Activated CD4-positive, alpha-beta memory T cell treated with anti-CD3 and anti-CD28 coated beads for 36 hours (primary cell): ENCODE measurements at regions of chr12 and their contacts with region 1.

Region 1: DNA sequence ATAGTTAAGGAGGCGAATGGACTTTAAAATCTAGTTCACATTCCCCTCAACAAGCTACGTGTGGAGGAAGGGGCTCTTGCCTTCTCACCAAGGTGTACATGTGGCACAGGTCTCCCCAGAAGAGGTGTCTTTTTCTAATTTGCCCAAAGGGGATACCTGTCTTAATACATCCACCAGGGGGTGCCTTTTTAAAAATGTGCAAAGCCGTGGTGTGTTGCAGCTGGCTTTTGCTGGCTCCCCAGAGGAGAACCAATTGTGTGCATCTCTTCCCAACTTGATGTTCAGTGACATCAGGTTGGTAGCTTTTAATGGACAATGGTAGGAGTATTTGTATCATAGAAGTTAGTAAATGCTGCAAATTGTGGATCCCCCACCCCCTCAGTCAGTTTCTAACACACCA is 33.8 kb downstream of the CREBL2 start:
- DNase-seq: peak; percentile 47
- H3K4me3 Mint-ChIP-seq: peak overlapping the region; percentile 29
- H3K27ac Mint-ChIP-seq: peak overlapping the region; percentile 82
- H3K4me1 Mint-ChIP-seq: peaks cover 21% of the 10 kb centered on the region
- H3K27me3 Mint-ChIP-seq: no peaks in the 10 kb centered on the region

Region 2: GRCh38 chr12:11885261-11886038 is 760.0 kb before region 1 on chr12:
- CTCF ChIA-PET with region 1: no interaction called
- POLR2A ChIA-PET with region 1: no interaction called
- intact Hi-C with region 1: no loop called
- DNase-seq: no peak
- H3K4me3 Mint-ChIP-seq: no peak overlapping the region
- H3K27ac Mint-ChIP-seq: no peak overlapping the region
- H3K4me1 Mint-ChIP-seq: peaks cover 25% of the 10 kb centered on the region
- H3K27me3 Mint-ChIP-seq: no peaks in the 10 kb centered on the region

Region 3: GRCh38 chr12:12582895-12583303 is 62.6 kb before region 1 on chr12:
- CTCF ChIA-PET with region 1: no interaction called
- POLR2A ChIA-PET with region 1: no interaction called
- intact Hi-C with region 1: loop called (anchors 2 kb)
- DNase-seq: peak; percentile 81
- H3K4me3 Mint-ChIP-seq: peak overlapping the region; percentile 40
- H3K27ac Mint-ChIP-seq: peak overlapping the region; percentile 84
- H3K4me1 Mint-ChIP-seq: peaks cover 50% of the 10 kb centered on the region
- H3K27me3 Mint-ChIP-seq: peaks cover 3% of the 10 kb centered on the region

Region 4: GRCh38 chr12:12622418-12622817 is 23.1 kb before region 1 on chr12:
- CTCF ChIA-PET with region 1: interaction called, 28 read pairs
- POLR2A ChIA-PET with region 1: no interaction called
- intact Hi-C with region 1: no loop called
- DNase-seq: no peak
- H3K4me3 Mint-ChIP-seq: peak overlapping the region; percentile 20
- H3K27ac Mint-ChIP-seq: peak overlapping the region; percentile 85
- H3K4me1 Mint-ChIP-seq: peaks cover 79% of the 10 kb centered on the region
- H3K27me3 Mint-ChIP-seq: no peaks in the 10 kb centered on the region

Region 5: DNA sequence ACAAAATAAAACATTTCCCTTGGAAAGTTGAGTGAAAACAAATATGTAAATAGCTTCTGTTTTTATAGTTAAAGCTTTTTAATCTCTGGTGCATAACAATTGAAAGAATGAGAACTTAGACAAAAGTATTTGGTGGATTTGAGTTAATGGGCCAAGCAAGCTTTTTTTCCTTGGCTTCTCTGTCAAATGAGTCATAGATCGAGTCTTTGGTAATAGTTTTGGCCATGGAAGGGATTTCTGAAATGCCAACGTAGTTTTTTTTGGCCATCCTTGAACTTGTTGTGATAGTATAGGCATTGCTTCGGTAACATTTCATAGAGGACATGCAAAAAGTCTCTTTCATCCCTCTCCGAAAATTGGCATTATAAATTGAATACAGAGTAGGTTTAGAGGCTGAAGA is 15.6 kb after region 1 on chr12:
- CTCF ChIA-PET with region 1: interaction called, 21 read pairs
- POLR2A ChIA-PET with region 1: interaction called, 5 read pairs
- intact Hi-C with region 1: loop called (anchors 1 kb)
- DNase-seq: no peak
- H3K4me3 Mint-ChIP-seq: no peak overlapping the region
- H3K27ac Mint-ChIP-seq: no peak overlapping the region
- H3K4me1 Mint-ChIP-seq: peaks cover under 1% of the 10 kb centered on the region
- H3K27me3 Mint-ChIP-seq: no peaks in the 10 kb centered on the region

Region 6: GRCh38 chr12:12704593-12705230 is 59.2 kb after region 1 on chr12:
- CTCF ChIA-PET with region 1: interaction called, 14 read pairs
- POLR2A ChIA-PET with region 1: no interaction called
- intact Hi-C with region 1: loop called (anchors 1 kb)
- DNase-seq: peak; percentile 34
- H3K4me3 Mint-ChIP-seq: no peak overlapping the region
- H3K27ac Mint-ChIP-seq: no peak overlapping the region
- H3K4me1 Mint-ChIP-seq: peaks cover 29% of the 10 kb centered on the region
- H3K27me3 Mint-ChIP-seq: no peaks in the 10 kb centered on the region

Region 7: GRCh38 chr12:12803186-12803585 is 157.7 kb after region 1 on chr12:
- CTCF ChIA-PET with region 1: no interaction called
- POLR2A ChIA-PET with region 1: no interaction called
- intact Hi-C with region 1: no loop called
- DNase-seq: peak; percentile 61
- H3K4me3 Mint-ChIP-seq: no peak overlapping the region
- H3K27ac Mint-ChIP-seq: peak overlapping the region; percentile 50
- H3K4me1 Mint-ChIP-seq: peaks cover 46% of the 10 kb centered on the region
- H3K27me3 Mint-ChIP-seq: no peaks in the 10 kb centered on the region